Activated T-helper 1 cell treated with anti-CD3 and anti-CD28 coated beads, Interleukin-12 subunit alpha, Interleukin-12 subunit beta, Interleukin-2, Interleukin-4 antibody, amounts not matched to agents 30 ng/mL and 10 ng/mL and 1 ng/mL, durations not matched to agents 14 hours and 24 hours and 36 hours (primary cell): ENCODE measurements at regions of chr17 and their contacts with region 1.

Region 1: DNA sequence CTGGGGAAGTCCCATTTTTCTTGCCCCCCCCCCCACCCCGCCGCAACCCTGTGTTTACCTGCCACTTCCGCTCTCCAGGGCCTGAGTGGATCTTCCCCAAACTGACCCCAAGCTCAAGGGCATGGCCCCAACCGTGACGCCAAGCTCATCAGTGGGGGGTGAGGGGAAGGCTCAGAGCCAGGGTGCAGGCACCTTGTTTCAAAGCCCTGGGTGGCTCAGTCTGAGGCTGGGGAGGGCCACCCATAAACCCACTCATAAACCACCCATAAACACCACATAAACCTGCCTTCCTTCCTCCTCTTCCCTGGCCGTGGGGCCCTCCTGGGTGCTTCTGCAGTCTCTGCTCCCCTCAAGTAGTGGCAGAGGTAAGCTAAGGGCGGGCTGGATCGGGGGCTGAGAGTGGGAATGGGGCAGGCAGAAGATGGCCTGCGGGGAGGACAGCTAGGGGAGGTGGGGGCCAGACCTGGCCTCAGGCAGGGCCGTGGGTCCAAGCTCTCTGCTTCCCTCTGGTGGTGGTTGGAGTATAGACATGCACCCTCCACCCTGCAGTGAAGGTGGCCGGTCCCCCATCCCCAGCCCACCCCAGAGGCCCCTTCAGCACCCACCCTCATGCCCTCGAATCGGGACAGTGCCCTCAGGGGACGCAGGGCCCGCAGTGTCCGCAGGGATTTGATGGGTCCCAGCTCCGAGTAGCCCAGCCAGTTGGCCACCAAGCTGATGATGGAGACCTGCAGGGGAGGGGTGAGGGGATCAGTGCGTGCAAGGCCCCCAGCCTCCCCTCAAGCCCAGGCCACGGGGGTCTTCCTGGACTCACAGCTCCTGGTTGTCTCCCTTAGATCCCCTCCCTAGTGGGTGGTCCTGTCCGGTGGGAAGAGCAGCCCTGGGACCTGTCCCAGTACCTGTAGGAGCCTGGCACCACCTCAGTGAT is 14.6 kb upstream of the CD79B start:
- DNase-seq: peak; percentile 44
- H3K4me3 Mint-ChIP-seq: peak overlapping the region; percentile 73
- H3K27ac Mint-ChIP-seq: peak overlapping the region; percentile 84
- H3K4me1 Mint-ChIP-seq: peaks cover 12% of the 10 kb centered on the region
- H3K27me3 Mint-ChIP-seq: peaks cover 6% of the 10 kb centered on the region

Region 2: GRCh38 chr17:62987137-62987536 is 959.6 kb before region 1 on chr17:
- intact Hi-C with region 1: no loop called
- DNase-seq: no peak
- H3K4me3 Mint-ChIP-seq: no peak overlapping the region
- H3K27ac Mint-ChIP-seq: no peak overlapping the region
- H3K4me1 Mint-ChIP-seq: no peaks in the 10 kb centered on the region
- H3K27me3 Mint-ChIP-seq: no peaks in the 10 kb centered on the region

Region 3: DNA sequence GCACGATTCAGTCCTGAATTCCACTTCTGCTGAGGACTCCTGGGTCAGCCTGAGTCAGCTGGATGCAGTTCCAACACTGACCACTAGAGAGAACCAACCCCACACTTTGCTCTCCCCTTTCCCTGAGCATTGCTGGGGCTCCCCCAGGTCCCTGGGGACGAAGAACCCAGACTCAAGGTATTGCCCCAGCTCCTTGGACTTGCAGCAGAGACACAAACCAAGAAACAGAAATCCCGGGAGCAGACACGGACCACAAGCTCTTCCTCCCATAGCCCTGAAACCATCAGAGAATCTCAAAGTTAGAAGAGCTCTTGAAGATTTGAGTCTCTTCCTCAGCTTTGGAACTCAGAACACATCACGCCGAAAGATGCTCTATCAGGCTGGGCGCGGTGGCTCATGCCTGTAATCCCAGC is 27.4 kb before region 1 on chr17:
- intact Hi-C with region 1: loop called (anchors 1 kb)
- DNase-seq: peak; percentile 65
- H3K4me3 Mint-ChIP-seq: no peak overlapping the region
- H3K27ac Mint-ChIP-seq: no peak overlapping the region
- H3K4me1 Mint-ChIP-seq: peaks cover 7% of the 10 kb centered on the region
- H3K27me3 Mint-ChIP-seq: peaks cover 8% of the 10 kb centered on the region

Region 4: DNA sequence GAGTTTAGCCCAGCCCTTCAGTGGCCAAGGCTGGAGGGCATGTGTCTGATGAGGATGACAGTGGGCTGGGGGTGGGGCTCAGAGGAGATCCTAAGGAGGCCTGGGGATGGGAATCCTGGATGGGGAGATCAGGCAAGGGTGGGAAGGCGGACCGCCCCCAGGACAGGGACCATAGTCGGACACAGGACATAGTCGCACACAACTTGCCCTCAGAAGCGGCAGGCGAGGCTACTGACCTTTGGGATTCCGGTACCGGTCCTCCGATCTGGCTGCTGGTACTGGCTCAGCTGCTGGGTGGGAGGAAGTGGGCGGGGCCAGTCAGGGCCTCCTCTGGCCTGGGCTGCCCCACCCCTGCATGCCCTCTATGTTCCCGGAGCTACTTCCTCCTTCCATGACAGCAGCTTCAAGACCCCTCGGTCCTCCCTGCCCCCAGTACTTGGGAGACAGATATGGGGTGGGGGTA is 15.6 kb before region 1 on chr17:
- intact Hi-C with region 1: loop called (anchors 1 kb)
- DNase-seq: peak; percentile 54
- H3K4me3 Mint-ChIP-seq: peak overlapping the region; percentile 90
- H3K27ac Mint-ChIP-seq: peak overlapping the region; percentile 91
- H3K4me1 Mint-ChIP-seq: peaks cover 17% of the 10 kb centered on the region
- H3K27me3 Mint-ChIP-seq: peaks cover 13% of the 10 kb centered on the region

Region 5: GRCh38 chr17:63961355-63962212 is 14.9 kb after region 1 on chr17:
- intact Hi-C with region 1: loop called (anchors 1 kb)
- DNase-seq: peak; percentile 20
- H3K4me3 Mint-ChIP-seq: peak overlapping the region; percentile 45
- H3K27ac Mint-ChIP-seq: no peak overlapping the region
- H3K4me1 Mint-ChIP-seq: peaks cover 1% of the 10 kb centered on the region
- H3K27me3 Mint-ChIP-seq: peaks cover 1% of the 10 kb centered on the region

Region 6: DNA sequence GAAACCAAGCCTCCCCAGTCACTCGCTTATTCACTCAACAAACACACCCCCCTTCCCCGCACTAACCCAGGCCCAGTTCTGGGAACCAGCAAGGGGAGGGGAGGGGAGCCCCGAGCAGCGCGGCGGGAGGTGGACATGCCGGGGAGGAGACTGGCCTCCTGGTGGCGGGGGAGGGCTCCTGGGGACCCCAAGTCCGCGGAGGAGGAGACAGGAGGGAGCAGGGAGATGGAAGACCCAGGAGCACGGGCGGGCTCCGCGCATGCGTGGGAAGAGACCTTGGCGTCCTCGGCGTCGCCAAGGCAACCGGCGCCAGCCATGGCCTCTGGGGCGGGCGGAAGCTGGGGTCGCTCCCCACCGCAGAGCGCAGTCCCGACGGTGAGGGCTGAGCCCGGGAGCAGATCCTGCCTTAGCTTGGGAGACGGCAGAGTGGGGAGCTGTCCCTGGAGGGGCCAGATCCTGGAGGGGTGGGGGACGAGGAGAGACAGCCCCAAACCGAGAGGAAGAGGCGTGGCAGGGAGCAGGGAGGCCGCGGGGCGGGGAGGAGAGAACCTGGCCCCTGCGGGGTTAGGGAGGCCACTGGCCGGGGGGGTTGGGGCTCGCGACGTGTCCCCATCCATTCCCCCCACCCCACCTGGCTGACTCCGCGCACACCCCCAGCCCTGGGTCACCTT is 51.5 kb after region 1 on chr17 and contains the start of gene PRR29:
- intact Hi-C with region 1: loop called (anchors 5 kb)
- DNase-seq: peak; percentile 71
- H3K4me3 Mint-ChIP-seq: peak within 1 kb of the TSS; percentile 85
- H3K27ac Mint-ChIP-seq: peak within 1 kb of the TSS; percentile 52
- H3K4me1 Mint-ChIP-seq: peaks cover 43% of the 10 kb centered on the region
- H3K27me3 Mint-ChIP-seq: peaks cover 17% of the 10 kb centered on the region
- total RNA-seq, gene PRR29: 0.44 and 0.91 TPM in 2 replicates